Ascending aorta (tissue), 2 donors: ENCODE measurements at regions of chr13 and their contacts with region 1.

Region 1: GRCh38 chr13:39209731-39210531 is 171.7 kb downstream of the NHLRC3 start:
- DNase-seq: no peak
- H3K4me3 ChIP-seq: no peak overlapping the region
- H3K27ac ChIP-seq: peak overlapping the region; percentile 40 to 45
- H3K4me1 ChIP-seq: peaks cover 3 to 10% of the 10 kb centered on the region in 2 donors
- H3K27me3 ChIP-seq: no peaks in the 10 kb centered on the region
- CTCF ChIP-seq: no peak

Region 2: DNA sequence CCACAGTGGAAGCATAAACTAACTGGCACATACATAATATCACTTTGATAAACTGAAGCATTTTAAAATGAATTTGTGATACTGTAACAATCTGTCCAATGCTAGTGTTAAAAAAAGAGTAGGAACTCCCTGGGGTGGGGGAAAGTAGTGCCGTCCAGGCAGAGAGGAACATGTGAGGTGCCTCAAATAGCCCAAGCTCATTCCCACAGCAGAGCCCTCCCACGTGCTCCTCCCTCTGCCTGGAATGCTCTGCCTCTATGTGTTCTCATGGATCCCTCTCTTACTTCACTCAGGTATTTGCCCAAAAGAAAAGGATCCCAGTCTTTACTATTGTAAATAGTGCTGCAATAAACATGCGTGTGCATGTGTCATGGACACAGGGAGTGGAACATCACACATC is 16.4 kb after region 1 on chr13:
- intact Hi-C with region 1: loop called (anchors 2 kb)
- DNase-seq: no peak
- H3K4me3 ChIP-seq: no peak overlapping the region
- H3K27ac ChIP-seq: no peak overlapping the region
- H3K4me1 ChIP-seq: peaks cover 0 to 9% of the 10 kb centered on the region in 2 donors
- H3K27me3 ChIP-seq: no peaks in the 10 kb centered on the region
- CTCF ChIP-seq: no peak

Region 3: GRCh38 chr13:39263033-39263432 is 53.1 kb after region 1 on chr13:
- intact Hi-C with region 1: no loop called
- DNase-seq: peak in 1 of 2 donors; percentile 67
- H3K4me3 ChIP-seq: no peak overlapping the region
- H3K27ac ChIP-seq: no peak overlapping the region
- H3K4me1 ChIP-seq: no peaks in the 10 kb centered on the region
- H3K27me3 ChIP-seq: no peaks in the 10 kb centered on the region
- CTCF ChIP-seq: peak; percentile 27 to 62 (median 53)